ENCODE measurements at regions of chr10 and their contacts with region 1.

Region 1: GRCh38 chr10:101840741-101841453 is 2.7 kb downstream of the KCNIP2 start:
- DNase-seq: peak; percentile 93
- ATAC-seq: peak; percentile 69

Region 2: DNA sequence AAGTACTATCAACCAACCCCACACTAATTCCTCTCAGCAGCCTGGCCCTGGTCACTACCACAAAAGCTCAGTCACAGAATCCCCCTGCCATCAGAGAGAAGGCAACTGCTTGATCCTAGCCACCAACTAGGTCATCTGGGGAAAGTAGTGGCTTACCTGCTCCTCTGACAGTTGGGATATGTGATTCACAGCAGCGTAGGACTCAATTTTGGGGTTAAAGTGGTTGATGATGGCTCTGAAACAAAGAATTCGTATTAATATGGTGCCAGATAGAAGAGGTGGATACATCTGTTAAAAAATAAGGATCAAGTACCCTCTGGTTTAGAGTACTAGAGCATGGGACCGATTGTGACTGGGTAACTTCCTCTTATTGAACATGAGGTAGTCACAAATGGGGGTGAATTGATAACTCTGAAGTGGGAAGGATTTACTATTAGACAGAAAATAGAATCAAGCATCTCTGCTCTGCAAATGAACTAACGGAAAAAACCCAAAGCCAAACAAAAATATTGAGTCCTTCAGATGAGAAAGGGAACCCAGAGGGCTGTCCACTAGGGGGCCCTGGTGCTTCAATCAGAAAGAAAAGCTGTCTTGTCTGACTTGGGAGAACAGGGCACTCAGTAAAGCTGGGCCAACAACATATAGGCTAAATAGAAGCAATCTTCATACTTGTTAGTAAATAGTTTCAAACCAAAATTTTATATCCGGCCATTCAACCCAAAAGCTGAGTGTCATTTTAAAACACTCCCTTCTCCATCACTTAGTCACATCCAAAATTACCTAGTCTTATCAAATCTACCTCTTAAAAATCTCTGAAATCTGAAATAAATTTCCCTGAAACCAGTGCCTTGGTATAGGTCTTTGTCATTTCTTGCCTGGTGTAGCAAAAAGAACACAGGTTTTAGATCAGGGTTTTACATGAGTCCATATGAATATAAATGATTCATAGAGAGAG is 48.6 kb after region 1 on chr10:
- intact Hi-C with region 1: loop called (anchors 2 kb)
- DNase-seq: peak; percentile 81
- ATAC-seq: no peak

Region 3: DNA sequence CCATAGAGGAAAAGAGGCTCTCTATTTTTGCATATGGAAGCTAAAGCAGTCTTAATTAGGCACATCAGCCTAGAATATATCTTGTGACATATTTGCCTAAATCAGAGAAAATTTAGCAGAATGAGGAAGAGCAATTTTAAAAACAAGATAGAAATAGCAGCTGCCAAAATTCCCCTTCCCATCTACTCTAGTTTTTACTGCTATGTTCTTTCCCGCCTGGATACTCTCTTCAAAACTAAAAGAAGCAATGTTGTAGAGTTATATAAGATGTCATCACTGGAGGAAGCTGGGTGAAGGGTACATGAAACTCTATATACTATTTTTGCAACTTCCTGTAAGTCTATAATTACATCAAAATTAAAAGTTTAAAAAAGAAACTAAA is 128.0 kb after region 1 on chr10:
- intact Hi-C with region 1: loop called (anchors 5 kb)
- DNase-seq: no peak
- ATAC-seq: no peak

Region 4: DNA sequence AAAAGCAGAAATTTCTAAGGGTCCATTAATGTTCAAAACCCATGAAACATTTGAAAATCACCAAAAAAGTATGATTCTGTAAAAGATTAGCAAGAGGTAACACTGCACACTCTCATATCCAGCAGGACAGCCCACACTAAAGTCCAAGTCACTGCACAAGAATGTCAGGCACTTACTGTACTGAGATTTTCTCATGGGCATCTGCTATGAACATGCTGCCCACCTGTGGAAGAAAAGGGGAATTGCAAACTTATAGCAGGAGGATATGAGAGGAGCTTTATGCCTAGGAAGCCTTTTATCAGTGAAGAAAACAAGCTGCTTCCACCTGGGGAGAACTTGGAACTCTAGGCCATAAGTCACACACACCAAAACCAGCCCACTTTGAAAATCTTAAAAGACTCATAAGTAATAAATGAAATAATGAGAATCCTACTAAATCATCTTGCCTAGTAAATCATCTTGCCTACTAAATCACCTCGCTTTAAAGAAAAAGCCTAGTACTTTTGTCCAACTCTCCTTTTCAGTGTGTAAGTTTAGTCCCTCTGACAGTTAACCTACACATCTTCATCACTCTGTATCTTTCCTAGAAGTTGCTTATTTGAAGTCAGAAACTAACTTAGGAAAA is 169.0 kb after region 1 on chr10:
- intact Hi-C with region 1: loop called (anchors 2 kb)
- DNase-seq: no peak
- ATAC-seq: peak; percentile 91

Region 5: GRCh38 chr10:102064868-102065560 is 224.1 kb after region 1 on chr10 and contains the start of gene HPS6:
- intact Hi-C with region 1: loop called (anchors 5 kb)
- DNase-seq: peak; percentile 96
- ATAC-seq: peak; percentile 98
- total RNA-seq, gene HPS6: 11.0 TPM